HCT116 (cell line): ENCODE measurements at regions of chr2 and their contacts with region 1.

Region 1: DNA sequence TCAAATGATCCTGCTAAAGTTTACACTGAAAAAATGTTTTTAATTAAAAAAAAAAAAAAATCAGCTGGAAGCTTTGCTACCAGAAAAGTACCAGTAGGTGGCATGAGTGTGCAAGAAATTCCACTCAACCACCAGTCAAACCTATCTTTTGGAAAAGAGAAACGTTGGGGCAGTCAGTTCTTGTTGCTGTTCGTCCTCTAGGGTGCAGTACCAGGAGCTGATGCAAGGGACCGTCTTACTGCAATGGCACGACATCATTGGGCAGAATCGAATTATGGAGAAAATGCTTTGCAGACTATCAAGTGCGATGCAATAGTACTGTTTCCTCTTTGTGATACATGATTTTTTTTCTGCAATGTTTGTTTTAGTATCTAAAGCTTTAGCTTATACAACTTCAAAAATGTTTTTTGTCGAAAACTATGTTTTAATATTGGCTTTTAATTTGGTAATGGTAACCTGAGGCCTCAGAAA is 18.3 kb downstream of the YPEL5 start:
- DNase-seq: peak; percentile 91
- ATAC-seq: peak; percentile 100
- H3K4me3 ChIP-seq: no peak overlapping the region
- H3K27ac ChIP-seq: no peak overlapping the region
- H3K4me1 ChIP-seq: peaks cover 0 to 6% of the 10 kb centered on the region in 2 experiments; a peak in 1 of 4 replicates
- H3K27me3 ChIP-seq: no peaks in the 10 kb centered on the region
- CTCF ChIP-seq: peak; percentile 80 to 99 (median 90)
- POLR2A ChIP-seq: no peak
- RAD21 ChIP-seq: peak; percentile 92

Region 2: GRCh38 chr2:30048636-30049180 is 116.4 kb before region 1 on chr2:
- CTCF ChIA-PET with region 1: no interaction called
- POLR2A ChIA-PET with region 1: no interaction called
- RAD21 ChIA-PET with region 1: no interaction called
- intact Hi-C with region 1: no loop called
- DNase-seq: no peak
- ATAC-seq: no peak
- H3K4me3 ChIP-seq: no peak overlapping the region
- H3K27ac ChIP-seq: no peak overlapping the region
- H3K4me1 ChIP-seq: no peaks in the 10 kb centered on the region
- H3K27me3 ChIP-seq: peaks cover 88% of the 10 kb centered on the region
- CTCF ChIP-seq: no peak
- POLR2A ChIP-seq: no peak
- RAD21 ChIP-seq: no peak

Region 3: GRCh38 chr2:30146438-30147147 is 18.5 kb before region 1 on chr2 and contains the start of gene YPEL5:
- CTCF ChIA-PET with region 1: interaction called, 25 read pairs
- POLR2A ChIA-PET with region 1: no interaction called
- RAD21 ChIA-PET with region 1: interaction called in 1 of 2 experiments, 5 read pairs
- intact Hi-C with region 1: no loop called
- DNase-seq: peak; percentile 99
- ATAC-seq: peak; percentile 95
- H3K4me3 ChIP-seq: peak within 1 kb of the TSS; percentile 67 to 76
- H3K27ac ChIP-seq: peak within 1 kb of the TSS; percentile 81; the same call in 1 of the 2 replicates
- H3K4me1 ChIP-seq: peaks cover 22 to 23% of the 10 kb centered on the region in 2 experiments
- H3K27me3 ChIP-seq: no peaks in the 10 kb centered on the region
- CTCF ChIP-seq: no peak
- POLR2A ChIP-seq: no peak
- RAD21 ChIP-seq: no peak
- total RNA-seq, gene YPEL5: 27.1 TPM

Region 4: DNA sequence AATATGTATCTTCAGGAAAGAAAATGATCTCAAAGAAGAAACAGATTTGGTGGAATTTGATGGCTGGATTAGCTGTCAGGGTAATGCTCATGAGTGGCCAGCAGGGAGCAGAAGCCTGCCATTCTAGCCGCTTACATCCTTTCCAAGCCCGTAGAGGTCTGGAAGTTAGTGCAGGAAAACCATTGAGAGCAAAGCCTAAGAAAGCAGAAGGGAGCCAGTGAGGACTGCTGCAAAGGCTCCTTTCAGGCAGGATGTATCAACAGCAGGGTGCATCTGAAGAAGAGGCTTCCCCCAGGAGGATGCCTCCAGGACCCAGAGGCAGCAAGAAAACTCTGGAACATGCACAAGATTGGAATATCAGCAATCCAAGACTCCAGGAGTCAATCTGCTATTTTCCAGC is 43.4 kb after region 1 on chr2:
- CTCF ChIA-PET with region 1: interaction called, 30 read pairs
- POLR2A ChIA-PET with region 1: no interaction called
- RAD21 ChIA-PET with region 1: interaction called, 4 to 8 read pairs
- intact Hi-C with region 1: loop called (anchors 1 kb)
- DNase-seq: peak; percentile 47
- ATAC-seq: peak; percentile 93
- H3K4me3 ChIP-seq: no peak overlapping the region
- H3K27ac ChIP-seq: no peak overlapping the region
- H3K4me1 ChIP-seq: peaks cover 0 to 4% of the 10 kb centered on the region in 2 experiments; a peak in 1 of 4 replicates
- H3K27me3 ChIP-seq: peaks cover 3% of the 10 kb centered on the region; the same call in 1 of the 2 replicates
- CTCF ChIP-seq: peak; percentile 79 to 96 (median 82)
- POLR2A ChIP-seq: no peak
- RAD21 ChIP-seq: peak; percentile 98

Region 5: GRCh38 chr2:30239308-30239985 is 74.4 kb after region 1 on chr2:
- CTCF ChIA-PET with region 1: interaction called, 10 read pairs
- POLR2A ChIA-PET with region 1: no interaction called
- RAD21 ChIA-PET with region 1: no interaction called
- intact Hi-C with region 1: no loop called
- DNase-seq: peak; percentile 55
- ATAC-seq: peak; percentile 97
- H3K4me3 ChIP-seq: no peak overlapping the region
- H3K27ac ChIP-seq: no peak overlapping the region
- H3K4me1 ChIP-seq: peaks cover 0 to 8% of the 10 kb centered on the region in 2 experiments; a peak in 1 of 4 replicates
- H3K27me3 ChIP-seq: peaks cover 3% of the 10 kb centered on the region; the same call in 1 of the 2 replicates
- CTCF ChIP-seq: peak; percentile 50 to 99 (median 97); a peak in 5 of 6 replicates
- POLR2A ChIP-seq: no peak
- RAD21 ChIP-seq: peak; percentile 67

Region 6: DNA sequence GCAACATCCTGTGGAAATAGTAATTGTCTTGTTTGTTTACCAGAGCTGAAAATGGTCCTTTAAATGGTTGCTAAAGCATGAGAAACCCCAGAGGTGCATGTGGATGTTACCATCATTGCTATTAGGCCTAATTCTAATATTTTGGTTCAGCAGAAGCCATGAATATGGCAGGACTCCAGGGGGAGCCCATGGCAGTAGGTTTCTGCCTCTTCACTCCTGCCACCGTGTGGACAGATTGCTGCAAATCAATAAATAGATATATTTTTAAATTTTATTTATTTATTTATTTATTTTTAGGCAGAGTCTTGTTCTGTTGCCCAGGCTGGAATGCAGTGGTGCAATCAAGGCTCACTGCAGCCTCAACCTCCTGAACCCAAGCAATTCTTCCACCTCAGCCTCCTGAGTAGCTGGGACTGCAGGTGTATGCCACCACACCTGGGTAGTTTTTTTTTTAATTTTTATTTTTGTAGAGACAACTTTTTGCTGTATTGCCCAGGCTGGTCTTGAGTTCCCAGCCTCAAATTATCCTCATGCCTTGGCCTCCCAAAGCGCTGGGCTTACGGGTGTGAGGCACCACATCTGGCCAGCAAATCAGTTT is 697.1 kb after region 1 on chr2:
- CTCF ChIA-PET with region 1: interaction called, 3 read pairs
- POLR2A ChIA-PET with region 1: no interaction called
- RAD21 ChIA-PET with region 1: no interaction called
- intact Hi-C with region 1: loop called (anchors 5 kb)
- DNase-seq: peak; percentile 55
- ATAC-seq: peak; percentile 55
- H3K4me3 ChIP-seq: no peak overlapping the region
- H3K27ac ChIP-seq: no peak overlapping the region
- H3K4me1 ChIP-seq: no peaks in the 10 kb centered on the region
- H3K27me3 ChIP-seq: peaks cover 6% of the 10 kb centered on the region; the same call in 1 of the 2 replicates
- CTCF ChIP-seq: peak; percentile 52 to 99 (median 77)
- POLR2A ChIP-seq: no peak
- RAD21 ChIP-seq: peak; percentile 67

Region 7: GRCh38 chr2:31170071-31170698 is 1005.1 kb after region 1 on chr2:
- CTCF ChIA-PET with region 1: interaction called, 11 read pairs
- POLR2A ChIA-PET with region 1: no interaction called
- RAD21 ChIA-PET with region 1: no interaction called
- intact Hi-C with region 1: no loop called
- DNase-seq: peak; percentile 40
- ATAC-seq: peak; percentile 97
- H3K4me3 ChIP-seq: no peak overlapping the region
- H3K27ac ChIP-seq: no peak overlapping the region
- H3K4me1 ChIP-seq: no peaks in the 10 kb centered on the region
- H3K27me3 ChIP-seq: peaks cover 21% of the 10 kb centered on the region; the same call in 1 of the 2 replicates
- CTCF ChIP-seq: peak; percentile 86 to 92 (median 90)
- POLR2A ChIP-seq: no peak
- RAD21 ChIP-seq: peak; percentile 89

Region 8: DNA sequence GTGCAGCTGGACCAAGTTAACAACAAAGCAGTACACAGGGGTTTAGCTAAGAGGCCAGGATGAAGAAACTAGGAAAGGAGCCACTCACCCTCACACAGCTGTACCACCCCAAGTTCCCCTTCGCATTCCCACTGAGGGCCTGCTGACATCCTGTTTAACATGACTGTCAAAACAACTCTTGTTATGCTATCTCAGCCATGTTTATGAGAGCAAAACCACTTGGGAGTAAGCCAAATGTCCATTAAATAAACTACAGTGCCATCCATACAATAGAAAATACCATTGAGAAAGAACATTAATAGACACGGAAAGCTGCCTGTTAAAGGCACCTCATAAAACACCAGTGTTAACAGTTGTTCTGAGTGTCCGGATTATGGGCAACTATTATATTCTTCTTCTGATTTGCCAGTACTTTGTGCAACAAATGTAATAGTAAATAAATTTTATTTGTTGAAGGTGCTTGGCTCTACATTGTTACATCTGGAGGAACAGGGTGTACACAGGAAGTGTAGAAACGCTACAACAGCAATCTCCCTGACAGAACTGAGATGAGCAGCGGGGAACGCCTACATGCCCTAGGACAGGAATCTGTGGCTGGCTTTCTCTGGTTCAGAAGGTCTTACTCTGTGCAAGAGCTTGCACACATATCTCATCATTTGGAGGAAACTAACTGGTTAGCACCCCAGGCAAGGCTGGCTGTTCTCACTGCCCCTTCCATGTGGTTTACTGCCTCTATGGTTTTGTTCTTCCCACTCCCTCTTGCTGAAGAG is 1154.5 kb after region 1 on chr2:
- CTCF ChIA-PET with region 1: no interaction called
- POLR2A ChIA-PET with region 1: no interaction called
- RAD21 ChIA-PET with region 1: no interaction called
- intact Hi-C with region 1: loop called (anchors 10 kb)
- DNase-seq: no peak
- ATAC-seq: no peak
- H3K4me3 ChIP-seq: no peak overlapping the region
- H3K27ac ChIP-seq: no peak overlapping the region
- H3K4me1 ChIP-seq: no peaks in the 10 kb centered on the region
- H3K27me3 ChIP-seq: peaks cover 8% of the 10 kb centered on the region
- CTCF ChIP-seq: no peak
- POLR2A ChIP-seq: no peak
- RAD21 ChIP-seq: no peak